AG04449 (cell line): ENCODE measurements at regions of chr11 and their contacts with region 1.

Region 1: GRCh38 chr11:7559398-7560283 is 45.8 kb downstream of the PPFIBP2 start:
- DNase-seq: no peak
- H3K4me3 ChIP-seq: no peak overlapping the region
- CTCF ChIP-seq: no peak

Region 2: DNA sequence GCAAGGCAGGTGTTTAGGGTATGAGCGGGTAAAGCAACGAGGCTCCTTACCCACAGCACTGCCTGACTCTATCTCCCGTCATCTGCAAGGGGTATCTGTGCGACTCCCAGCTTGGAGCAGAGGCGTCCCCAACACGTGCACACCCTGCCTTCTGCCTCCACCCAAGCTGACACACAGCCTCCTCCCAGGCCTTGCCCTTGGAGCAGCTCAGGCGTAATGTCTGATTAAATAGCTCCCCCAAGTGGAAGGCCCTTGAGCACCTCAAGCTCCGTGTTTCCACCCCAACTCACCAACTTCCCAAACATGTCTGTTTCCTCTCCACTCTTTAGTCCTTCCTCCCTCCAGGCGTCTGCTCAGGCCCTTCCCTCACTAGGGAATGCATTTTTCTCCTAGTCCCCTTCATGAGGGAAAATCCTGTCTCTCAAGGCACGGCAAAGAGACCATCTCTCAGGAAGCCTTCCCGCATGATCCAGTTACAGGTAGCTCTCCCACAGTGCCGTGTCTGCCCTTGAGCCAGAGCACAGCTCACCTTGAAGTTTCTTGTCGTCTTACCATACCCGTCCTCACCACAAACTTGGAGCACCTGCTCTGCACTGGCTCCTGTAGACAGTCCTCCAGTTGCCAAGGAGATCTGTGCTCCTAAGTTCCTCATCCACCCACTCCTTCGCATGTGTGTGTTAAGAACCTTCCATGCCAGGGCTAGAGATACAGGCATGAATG is 97.8 kb after region 1 on chr11:
- CTCF ChIA-PET with region 1: interaction called, 10 read pairs
- POLR2A ChIA-PET with region 1: no interaction called
- DNase-seq: no peak
- H3K4me3 ChIP-seq: no peak overlapping the region
- CTCF ChIP-seq: peak; percentile 59